Endothelial cell of umbilical vein (primary cell): ENCODE measurements at regions of chr16 and their contacts with region 1.

Region 1: DNA sequence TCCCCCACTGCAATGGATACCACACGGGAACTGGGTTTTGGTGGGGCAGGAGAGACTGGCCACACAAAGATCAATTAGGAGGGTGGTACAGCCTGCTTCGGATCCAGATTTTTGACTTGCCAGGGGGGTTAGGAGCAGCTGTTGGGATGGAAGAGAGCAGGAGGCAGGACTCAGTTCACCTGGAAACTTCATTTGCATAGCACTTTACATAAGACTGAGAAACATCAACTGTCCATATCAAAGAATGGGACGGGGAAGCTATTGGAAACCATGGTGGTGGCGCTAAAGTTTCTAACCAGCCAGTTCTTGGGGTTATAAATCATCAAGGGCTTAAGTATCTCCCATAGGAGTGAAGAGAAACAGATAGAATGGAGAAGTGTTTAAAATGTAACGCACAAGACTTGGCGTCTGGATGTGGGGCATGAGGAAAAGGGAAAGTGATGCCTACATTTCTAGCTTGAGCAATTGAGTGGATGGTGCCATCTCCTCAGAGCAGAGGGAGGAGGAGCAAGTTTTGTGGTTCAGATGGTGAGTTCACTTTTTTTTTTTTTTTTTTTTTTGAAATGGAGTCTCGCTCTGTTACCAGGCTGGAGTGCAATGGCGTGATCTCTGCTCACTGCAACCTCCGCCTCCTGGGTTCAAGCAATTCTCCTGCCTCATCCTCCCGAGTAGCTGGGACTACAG is 6.4 kb upstream of the SRCAP start:
- DNase-seq: no peak
- H3K4me3 ChIP-seq: no peak overlapping the region
- H3K27ac ChIP-seq: no peak overlapping the region
- H3K4me1 ChIP-seq: peaks cover 8% of the 10 kb centered on the region
- H3K27me3 ChIP-seq: peaks cover 0 to 3% of the 10 kb centered on the region in 2 experiments
- CTCF ChIP-seq: no peak
- POLR2A ChIP-seq: no peak

Region 2: GRCh38 chr16:30650369-30651123 is 42.0 kb before region 1 on chr16 and contains the start of gene PRR14:
- CTCF ChIA-PET with region 1: interaction called, 21 read pairs
- POLR2A ChIA-PET with region 1: no interaction called
- dilution Hi-C with region 1: no loop called
- intact Hi-C with region 1: no loop called
- DNase-seq: peak; percentile 100
- H3K4me3 ChIP-seq: peak within 1 kb of the TSS; percentile 36 to 95 (median 66)
- H3K27ac ChIP-seq: peak within 1 kb of the TSS; percentile 52
- H3K4me1 ChIP-seq: peaks cover 11% of the 10 kb centered on the region
- H3K27me3 ChIP-seq: no peaks in the 10 kb centered on the region
- CTCF ChIP-seq: no peak
- POLR2A ChIP-seq: peak; percentile 25
- total RNA-seq, gene PRR14: 57.0 and 70.0 TPM in 2 replicates

Region 3: GRCh38 chr16:30669896-30670797 is 22.4 kb before region 1 on chr16:
- CTCF ChIA-PET with region 1: interaction called, 24 read pairs
- POLR2A ChIA-PET with region 1: no interaction called
- dilution Hi-C with region 1: no loop called
- intact Hi-C with region 1: no loop called
- DNase-seq: no peak
- H3K4me3 ChIP-seq: no peak overlapping the region
- H3K27ac ChIP-seq: no peak overlapping the region
- H3K4me1 ChIP-seq: no peaks in the 10 kb centered on the region
- H3K27me3 ChIP-seq: no peaks in the 10 kb centered on the region
- CTCF ChIP-seq: no peak
- POLR2A ChIP-seq: no peak

Region 4: GRCh38 chr16:30677931-30678585 is 14.5 kb before region 1 on chr16:
- CTCF ChIA-PET with region 1: interaction called, 24 read pairs
- POLR2A ChIA-PET with region 1: no interaction called
- dilution Hi-C with region 1: no loop called
- intact Hi-C with region 1: no loop called
- DNase-seq: no peak
- H3K4me3 ChIP-seq: no peak overlapping the region
- H3K27ac ChIP-seq: no peak overlapping the region
- H3K4me1 ChIP-seq: no peaks in the 10 kb centered on the region
- H3K27me3 ChIP-seq: no peaks in the 10 kb centered on the region
- CTCF ChIP-seq: no peak
- POLR2A ChIP-seq: no peak